ENCODE measurements at regions of chr10 and their contacts with region 1.

Region 1: DNA sequence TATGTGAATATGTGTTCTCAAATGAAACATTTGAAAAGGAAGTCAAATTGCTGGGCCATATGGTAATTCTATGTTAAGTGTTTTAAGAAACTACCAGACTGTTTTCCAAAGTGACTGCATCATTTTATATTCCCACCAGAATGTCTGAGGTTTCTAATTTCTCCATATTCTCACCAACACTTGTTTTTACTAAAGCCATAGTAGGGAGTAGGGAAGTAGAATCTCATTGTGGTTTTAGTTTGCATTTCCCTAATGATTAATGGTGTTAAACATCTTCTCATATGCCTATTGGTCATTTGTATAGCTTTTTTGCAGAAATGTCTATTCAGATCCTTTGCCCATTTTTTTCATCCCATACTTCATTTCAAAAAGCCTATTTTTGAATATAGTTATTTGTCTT is 9.1 kb upstream of the SEMA4G start:
- DNase-seq: no peak
- ATAC-seq: no peak
- H3K4me3 ChIP-seq: no peak overlapping the region
- H3K27ac ChIP-seq: no peak overlapping the region
- H3K4me1 ChIP-seq: no peaks in the 10 kb centered on the region
- H3K27me3 ChIP-seq: no peaks in the 10 kb centered on the region
- CTCF ChIP-seq: no peak

Region 2: DNA sequence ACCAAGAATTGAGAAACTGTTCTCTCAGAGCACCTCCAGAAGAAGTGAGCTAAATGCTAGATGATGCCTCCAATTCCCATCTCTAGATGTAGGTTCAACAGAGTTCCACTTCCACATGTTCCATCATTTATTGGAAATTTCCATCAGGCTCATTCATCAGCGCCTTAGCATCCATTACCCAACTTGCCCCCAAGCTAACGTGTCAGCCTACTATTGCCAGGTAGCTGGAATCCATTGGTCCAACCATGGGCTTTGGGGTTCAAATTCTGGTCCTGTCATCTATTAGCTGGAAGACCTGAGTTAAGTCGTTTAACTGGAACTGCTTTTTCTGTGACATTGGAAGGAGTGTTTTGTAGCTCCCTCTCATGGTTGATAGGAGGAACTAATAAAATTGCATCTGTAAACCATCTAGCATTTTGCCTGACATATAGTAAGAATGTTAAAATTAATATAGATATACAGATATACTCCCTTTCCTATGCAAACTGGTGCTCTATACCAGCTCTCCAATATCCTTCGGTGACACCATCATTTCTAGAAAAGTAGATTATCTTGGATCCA is 71.4 kb before region 1 on chr10:
- CTCF ChIA-PET with region 1: no interaction called
- POLR2A ChIA-PET with region 1: interaction called, 22 read pairs
- in situ Hi-C with region 1: no loop called
- intact Hi-C with region 1: no loop called
- DNase-seq: no peak
- ATAC-seq: no peak
- H3K4me3 ChIP-seq: no peak overlapping the region
- H3K27ac ChIP-seq: no peak overlapping the region
- H3K4me1 ChIP-seq: no peaks in the 10 kb centered on the region
- H3K27me3 ChIP-seq: peaks cover 7% of the 10 kb centered on the region; the same call in 1 of the 2 replicates
- CTCF ChIP-seq: peak; percentile 51